ENCODE measurements at regions of chr6 and their contacts with region 1.

Region 1: DNA sequence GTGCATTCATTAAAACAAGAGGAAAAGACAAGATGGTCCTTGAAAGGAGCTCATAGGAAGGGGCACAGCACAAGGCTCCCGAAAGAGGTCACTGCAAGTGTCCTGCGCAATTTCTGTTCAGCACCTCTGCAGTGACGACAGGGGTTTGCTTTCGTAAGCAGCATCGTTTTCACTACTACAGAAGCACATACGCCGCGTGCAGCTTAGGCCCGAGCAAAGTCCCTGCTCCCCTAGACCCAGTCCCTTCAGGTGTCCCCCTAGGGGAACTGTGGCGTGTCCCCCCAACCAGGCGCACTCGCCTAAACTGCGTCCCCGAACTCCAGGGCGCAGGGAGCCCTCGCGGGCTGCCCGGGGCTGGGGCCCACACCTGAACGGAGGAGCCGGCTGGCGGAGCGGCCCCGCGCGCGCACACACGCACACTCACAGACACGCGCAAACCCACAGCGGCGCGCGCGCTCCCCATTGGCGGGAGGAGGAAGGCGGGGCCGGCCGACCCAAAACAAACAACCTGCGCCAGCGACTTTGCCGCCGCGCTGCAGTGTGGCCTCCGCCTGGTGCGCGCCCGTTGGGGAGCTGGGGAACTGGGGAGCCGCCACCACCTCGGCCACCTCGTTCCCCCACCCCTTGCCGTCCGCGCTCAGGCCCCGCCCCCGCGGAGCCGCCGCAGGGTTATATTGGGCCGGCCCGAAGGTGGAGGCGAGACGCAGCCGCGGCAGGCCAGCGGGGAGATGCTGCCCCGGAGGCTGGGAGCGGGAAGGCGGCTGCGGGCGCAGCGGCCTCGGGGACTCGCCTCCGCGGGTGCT is at the start of gene FOXQ1:
- DNase-seq: peak; percentile 82 to 97
- H3K4me3 ChIP-seq: peak within 1 kb of the TSS; percentile 69
- H3K27ac ChIP-seq: peak within 1 kb of the TSS; percentile 90
- H3K4me1 ChIP-seq: peaks cover 11% of the 10 kb centered on the region; the same call in 1 of the 2 replicates
- H3K27me3 ChIP-seq: no peaks in the 10 kb centered on the region
- CTCF ChIP-seq: no peak
- total RNA-seq, gene FOXQ1: 55.8 and 57.0 TPM in 2 replicates

Region 2: DNA sequence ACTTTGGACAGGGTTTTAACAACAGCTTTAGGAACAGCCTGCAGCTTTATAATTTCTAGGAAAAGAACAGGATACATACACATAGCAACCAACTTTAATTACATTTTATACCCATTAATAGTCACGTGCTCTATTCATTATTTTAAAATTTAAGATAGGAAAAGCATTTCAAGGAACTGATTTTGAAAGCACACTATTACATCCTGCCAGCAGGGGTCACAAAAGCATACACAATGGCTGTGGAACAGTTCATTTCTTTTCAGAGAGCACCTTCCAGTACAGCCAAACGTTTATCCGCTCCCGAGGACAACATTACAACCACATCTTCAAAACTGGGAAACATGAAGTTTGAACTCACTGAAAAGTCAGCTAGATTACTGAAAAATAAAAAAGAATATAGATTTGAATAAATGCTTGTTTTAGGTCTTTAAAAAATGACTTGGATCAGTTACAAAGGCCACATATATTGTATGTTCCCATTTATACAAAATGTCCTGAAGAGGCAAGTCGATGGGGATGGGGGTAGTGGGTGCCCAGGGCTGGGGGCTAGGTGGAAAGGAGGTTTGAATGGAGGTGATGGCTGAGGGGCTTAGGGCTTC is 514.0 kb before region 1 on chr6:
- CTCF ChIA-PET with region 1: no interaction called
- POLR2A ChIA-PET with region 1: no interaction called
- intact Hi-C with region 1: loop called (anchors 1 kb)
- DNase-seq: peak in 1 of 2 experiments; percentile 35
- H3K4me3 ChIP-seq: no peak overlapping the region
- H3K27ac ChIP-seq: no peak overlapping the region
- H3K4me1 ChIP-seq: no peaks in the 10 kb centered on the region
- H3K27me3 ChIP-seq: no peaks in the 10 kb centered on the region
- CTCF ChIP-seq: peak; percentile 84

Region 3: GRCh38 chr6:1082285-1082935 is 229.2 kb before region 1 on chr6:
- CTCF ChIA-PET with region 1: no interaction called
- POLR2A ChIA-PET with region 1: no interaction called
- intact Hi-C with region 1: loop called (anchors 1 kb)
- DNase-seq: peak in 1 of 2 experiments; percentile 51
- H3K4me3 ChIP-seq: no peak overlapping the region
- H3K27ac ChIP-seq: no peak overlapping the region
- H3K4me1 ChIP-seq: 0 out of 2 replicates have a peak, but pooled peaks cover 8% of the 10 kb centered on the region
- H3K27me3 ChIP-seq: no peaks in the 10 kb centered on the region
- CTCF ChIP-seq: no peak

Region 4: DNA sequence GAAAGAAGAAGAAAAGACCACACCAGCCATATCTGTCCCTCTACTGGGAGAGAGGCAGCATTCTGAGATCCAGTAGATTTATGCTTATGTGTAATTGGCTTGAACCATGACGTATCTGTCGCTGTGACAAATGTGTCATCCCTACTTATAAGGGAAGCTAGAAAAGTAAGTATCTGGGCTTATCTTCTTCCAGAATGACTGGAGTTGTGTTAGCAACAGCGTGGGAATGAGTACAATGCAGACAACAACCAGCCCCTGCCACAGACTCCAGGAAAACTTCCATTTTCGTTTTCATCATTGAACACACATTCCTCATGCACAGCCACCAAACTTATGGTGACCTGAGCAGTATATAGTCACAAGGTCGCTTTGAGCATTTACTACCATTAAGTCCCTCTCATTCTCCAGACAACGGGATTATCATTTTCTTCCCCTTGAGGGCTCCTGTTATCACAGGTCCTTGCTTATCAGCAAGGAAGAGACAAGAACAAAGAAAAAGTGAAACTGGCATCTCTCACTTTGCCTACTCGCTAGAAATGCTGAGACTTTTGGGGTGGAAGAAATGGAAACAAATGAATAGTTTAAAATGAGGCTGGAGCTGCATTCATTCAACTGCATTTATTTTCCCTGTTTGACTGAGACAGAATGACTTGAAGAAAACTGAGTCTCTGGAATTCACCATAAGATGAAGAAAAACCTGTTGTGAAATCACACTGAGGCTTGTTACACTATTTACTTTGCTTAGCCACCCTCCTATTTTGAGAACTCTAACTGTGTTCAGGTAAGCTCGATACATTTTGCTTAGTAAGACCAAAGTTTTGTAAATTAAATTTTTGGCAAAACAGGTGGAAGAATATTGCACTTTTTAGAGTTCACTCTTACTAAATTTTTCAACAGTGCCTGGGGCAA is 149.0 kb before region 1 on chr6:
- CTCF ChIA-PET with region 1: no interaction called
- POLR2A ChIA-PET with region 1: no interaction called
- intact Hi-C with region 1: loop called (anchors 2 kb)
- DNase-seq: peak in 1 of 2 experiments; percentile 41
- H3K4me3 ChIP-seq: no peak overlapping the region
- H3K27ac ChIP-seq: no peak overlapping the region
- H3K4me1 ChIP-seq: peaks cover 5% of the 10 kb centered on the region; the same call in 1 of the 2 replicates
- H3K27me3 ChIP-seq: no peaks in the 10 kb centered on the region
- CTCF ChIP-seq: no peak

Region 5: DNA sequence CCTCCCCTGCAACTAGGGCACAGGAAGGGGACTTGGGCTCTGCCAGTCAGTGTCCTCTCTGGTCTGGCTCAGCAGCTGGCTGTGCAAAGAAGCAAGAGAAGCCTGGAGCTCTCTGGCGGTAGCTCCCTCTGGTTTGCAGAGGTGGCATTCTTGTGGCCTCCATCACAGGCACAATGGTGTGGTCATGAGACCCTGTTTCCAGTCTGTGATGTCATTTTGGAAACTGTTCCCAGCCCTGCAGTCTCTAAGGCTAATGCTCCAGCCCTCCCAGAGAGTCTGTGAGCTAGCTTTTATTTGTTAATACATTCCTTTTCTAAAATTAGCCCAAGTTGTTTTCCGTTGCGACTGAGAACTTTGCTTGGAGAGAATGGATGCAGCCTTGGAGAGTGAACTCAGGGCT is 69.2 kb before region 1 on chr6:
- CTCF ChIA-PET with region 1: no interaction called
- POLR2A ChIA-PET with region 1: interaction called, 11 read pairs
- intact Hi-C with region 1: no loop called
- DNase-seq: no peak
- H3K4me3 ChIP-seq: no peak overlapping the region
- H3K27ac ChIP-seq: no peak overlapping the region
- H3K4me1 ChIP-seq: peaks cover 8% of the 10 kb centered on the region; the same call in 1 of the 2 replicates
- H3K27me3 ChIP-seq: no peaks in the 10 kb centered on the region
- CTCF ChIP-seq: no peak

Region 6: GRCh38 chr6:1286972-1287610 is 24.5 kb before region 1 on chr6:
- CTCF ChIA-PET with region 1: no interaction called
- POLR2A ChIA-PET with region 1: interaction called, 10 read pairs
- intact Hi-C with region 1: loop called (anchors 1 kb)
- DNase-seq: peak; percentile 87 to 99
- H3K4me3 ChIP-seq: no peak overlapping the region
- H3K27ac ChIP-seq: peak overlapping the region; percentile 86
- H3K4me1 ChIP-seq: peaks cover 38% of the 10 kb centered on the region
- H3K27me3 ChIP-seq: no peaks in the 10 kb centered on the region
- CTCF ChIP-seq: no peak

Region 7: GRCh38 chr6:1335367-1336037 is 23.9 kb after region 1 on chr6:
- CTCF ChIA-PET with region 1: interaction called, 18 read pairs
- POLR2A ChIA-PET with region 1: interaction called, 39 read pairs
- intact Hi-C with region 1: loop called (anchors 1 kb)
- DNase-seq: peak; percentile 88 to 97
- H3K4me3 ChIP-seq: peak overlapping the region; percentile 48
- H3K27ac ChIP-seq: peak overlapping the region; percentile 98
- H3K4me1 ChIP-seq: peaks cover 63% of the 10 kb centered on the region
- H3K27me3 ChIP-seq: no peaks in the 10 kb centered on the region
- CTCF ChIP-seq: no peak

Measured in PC-9 (cell line).